Psoas muscle (tissue), 8 donors: ENCODE measurements at regions of chrX and their contacts with region 1.

Region 1: DNA sequence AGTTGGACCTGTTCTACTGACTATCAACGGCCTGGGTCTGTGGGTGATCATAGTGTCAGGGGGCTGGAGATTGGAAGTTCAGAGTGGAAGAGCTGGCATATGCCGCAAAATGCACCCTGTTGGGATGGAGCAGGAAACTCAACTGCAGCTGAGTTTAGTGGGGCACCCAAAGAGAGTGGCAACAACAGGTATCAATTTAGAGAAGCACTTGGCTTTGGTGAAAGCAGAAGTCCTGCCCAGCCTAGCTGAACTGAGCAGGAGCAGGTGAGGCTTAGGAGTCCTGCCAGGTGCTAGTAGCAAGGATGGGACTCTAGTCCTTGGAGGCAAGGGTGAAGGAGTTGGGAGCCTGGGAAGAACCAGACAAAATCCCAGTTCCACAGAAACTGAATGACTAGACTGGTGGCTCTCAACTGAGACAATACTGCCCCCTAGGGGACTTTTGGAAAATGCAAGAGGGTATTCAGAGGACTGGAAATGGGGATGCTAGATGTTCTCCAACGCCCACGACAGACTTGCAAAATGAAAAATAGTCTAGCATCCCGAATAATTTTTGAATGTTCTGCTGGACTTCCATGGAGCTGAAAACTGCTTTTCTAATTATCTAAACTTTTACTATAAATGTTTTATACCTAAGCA is 49.4 kb downstream of the RTL9 start:
- DNase-seq: no peak
- ATAC-seq: peak; percentile 61 to 80 (median 68)
- H3K4me3 ChIP-seq: no peak overlapping the region
- H3K27ac ChIP-seq: no peak overlapping the region
- H3K4me1 ChIP-seq: no peaks in the 10 kb centered on the region
- H3K27me3 ChIP-seq: peaks cover 0 to 8% (median 0%) of the 10 kb centered on the region in 3 donors
- CTCF ChIP-seq: peak; percentile 74

Region 2: DNA sequence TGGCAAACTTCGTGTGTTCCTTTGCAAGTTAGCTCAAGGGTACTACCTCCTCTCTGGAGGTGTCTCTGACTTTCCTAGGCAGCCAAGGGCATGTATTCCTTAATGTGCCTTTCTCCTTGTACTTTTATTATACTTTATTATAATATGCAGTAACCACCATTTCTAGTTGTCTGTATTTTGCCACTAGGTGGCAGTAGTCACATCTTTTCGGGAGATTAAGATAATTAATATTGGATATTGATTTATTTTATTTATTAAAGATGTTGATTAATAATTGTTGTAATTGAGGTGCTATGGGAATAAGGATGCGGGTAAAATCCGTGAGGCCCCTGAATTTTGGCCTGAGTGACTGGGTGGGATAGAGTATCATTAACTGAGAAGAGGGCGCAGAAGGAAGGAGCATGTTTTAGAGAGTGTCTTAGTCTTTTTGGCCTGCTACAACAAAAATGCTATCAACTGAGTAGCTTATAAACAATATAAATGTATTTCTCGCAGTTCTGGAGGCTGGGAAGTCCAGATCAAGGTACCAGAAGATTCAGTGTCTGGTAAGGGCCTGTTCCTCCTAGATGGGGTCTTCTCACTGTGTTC is 251.8 kb before region 1 on chrX:
- intact Hi-C with region 1: loop called (anchors 2 to 5 kb)
- DNase-seq: no peak
- ATAC-seq: no peak
- H3K4me3 ChIP-seq: no peak overlapping the region
- H3K27ac ChIP-seq: no peak overlapping the region
- H3K4me1 ChIP-seq: peaks cover 4% of the 10 kb centered on the region
- H3K27me3 ChIP-seq: peaks cover 0 to 19% (median 0%) of the 10 kb centered on the region in 3 donors
- CTCF ChIP-seq: peak; percentile 44